ENCODE measurements at regions of chr2 and their contacts with region 1.

Region 1: DNA sequence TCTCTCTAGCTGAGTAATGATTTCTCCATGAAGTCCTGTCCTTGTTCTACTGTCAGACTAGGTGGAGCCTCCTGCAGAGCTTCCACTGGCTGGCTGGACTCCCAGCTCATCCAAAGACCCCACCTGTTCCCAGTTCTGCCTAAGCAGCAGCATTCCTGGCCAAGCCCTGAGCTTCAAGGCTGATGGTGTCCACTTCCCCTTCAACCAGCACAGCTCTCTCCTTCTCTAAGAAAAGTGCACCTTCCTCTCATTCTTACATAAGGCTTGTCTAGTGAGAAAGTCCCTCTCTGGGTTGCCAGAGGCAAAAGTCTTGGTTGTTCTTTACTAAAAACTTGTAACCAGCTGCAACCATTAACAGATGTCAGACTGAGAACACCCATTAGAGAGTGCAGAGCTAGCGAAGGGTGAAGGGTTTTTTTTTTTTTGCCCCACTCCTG is 58.9 kb downstream of the CXCR4 start:
- DNase-seq: no peak
- H3K4me3 Mint-ChIP-seq: no peak overlapping the region
- H3K27ac Mint-ChIP-seq: no peak overlapping the region
- H3K4me1 Mint-ChIP-seq: peaks cover 63% of the 10 kb centered on the region
- H3K27me3 Mint-ChIP-seq: no peaks in the 10 kb centered on the region

Region 2: DNA sequence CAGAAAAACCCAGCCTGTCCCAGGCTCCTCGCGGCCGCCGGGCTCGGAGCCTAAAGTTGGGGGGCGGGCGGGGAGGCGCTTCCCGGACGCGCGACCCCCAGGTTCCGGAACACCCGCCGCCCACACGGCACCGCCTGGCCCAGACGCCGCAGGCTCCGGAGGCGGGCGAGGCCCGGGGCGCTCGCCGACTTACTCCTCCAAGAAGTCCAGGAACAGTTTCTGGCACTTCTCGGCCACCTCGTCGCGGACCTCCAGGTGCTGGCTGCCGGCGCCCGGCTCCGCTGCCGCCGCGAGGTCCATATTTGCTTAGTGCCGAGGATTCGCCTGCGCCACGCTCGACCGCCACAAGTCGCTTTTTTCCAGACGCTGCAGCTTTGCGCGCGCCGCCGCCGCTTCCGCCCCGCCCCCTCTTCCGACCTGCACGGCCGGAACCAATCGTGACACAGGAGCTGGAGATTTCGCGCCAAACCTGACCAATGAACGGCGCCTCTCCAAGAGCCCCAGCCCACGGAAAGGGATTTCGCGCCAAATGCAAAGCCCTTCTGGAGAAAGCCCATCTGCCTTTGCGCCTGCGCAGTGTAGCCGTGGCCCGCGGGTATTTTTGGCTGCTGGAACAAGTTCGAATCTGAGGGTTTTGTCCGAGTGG is 182.9 kb before region 1 on chr2 and contains the start of gene MCM6:
- CTCF ChIA-PET with region 1: no interaction called
- POLR2A ChIA-PET with region 1: interaction called, 8 read pairs
- intact Hi-C with region 1: loop called (anchors 2 kb)
- DNase-seq: peak; percentile 100
- H3K4me3 Mint-ChIP-seq: peak within 1 kb of the TSS; percentile 90
- H3K27ac Mint-ChIP-seq: peak within 1 kb of the TSS; percentile 98
- H3K4me1 Mint-ChIP-seq: peaks cover 39% of the 10 kb centered on the region
- H3K27me3 Mint-ChIP-seq: peaks cover 2% of the 10 kb centered on the region
- total RNA-seq, gene MCM6: 280 to 284 TPM

Region 3: DNA sequence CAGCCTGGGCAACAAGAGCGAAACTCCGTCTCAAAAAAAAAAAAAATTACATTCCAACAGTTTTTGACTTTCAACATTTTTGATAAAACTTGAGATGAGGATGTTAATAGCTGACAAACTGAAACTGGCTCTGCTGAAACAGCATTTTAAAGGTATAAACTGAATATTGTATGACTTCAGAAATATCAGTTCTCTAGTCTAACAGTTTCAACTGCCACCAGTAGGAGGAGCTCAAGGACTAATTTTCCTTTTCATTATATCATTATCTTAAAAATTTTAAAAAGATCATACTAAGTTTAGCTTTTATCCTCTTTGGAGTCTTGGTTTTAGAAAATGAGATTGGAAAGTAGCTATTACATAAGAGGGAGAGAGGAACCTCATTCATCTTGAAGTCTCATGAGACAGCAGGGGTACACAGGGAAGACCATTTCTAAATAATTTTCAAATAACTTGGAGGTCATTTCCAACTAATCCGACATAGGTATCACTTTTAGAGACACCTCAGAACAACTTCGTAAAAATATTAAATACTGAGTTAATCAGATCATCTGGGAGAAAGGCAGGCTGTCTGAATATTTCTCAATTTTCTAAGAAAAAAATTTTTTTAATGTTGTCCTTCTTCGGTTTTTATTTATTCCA is 145.2 kb before region 1 on chr2:
- CTCF ChIA-PET with region 1: interaction called, 3 read pairs
- POLR2A ChIA-PET with region 1: no interaction called
- intact Hi-C with region 1: loop called (anchors 2 kb)
- DNase-seq: no peak
- H3K4me3 Mint-ChIP-seq: no peak overlapping the region
- H3K27ac Mint-ChIP-seq: no peak overlapping the region
- H3K4me1 Mint-ChIP-seq: peaks cover 14% of the 10 kb centered on the region
- H3K27me3 Mint-ChIP-seq: no peaks in the 10 kb centered on the region

Region 4: GRCh38 chr2:135948642-135949355 is 110.3 kb before region 1 on chr2:
- CTCF ChIA-PET with region 1: no interaction called
- POLR2A ChIA-PET with region 1: interaction called, 14 read pairs
- intact Hi-C with region 1: loop called (anchors 1 kb)
- DNase-seq: peak; percentile 55
- H3K4me3 Mint-ChIP-seq: peak overlapping the region; percentile 53
- H3K27ac Mint-ChIP-seq: peak overlapping the region; percentile 87
- H3K4me1 Mint-ChIP-seq: peaks cover 64% of the 10 kb centered on the region
- H3K27me3 Mint-ChIP-seq: no peaks in the 10 kb centered on the region

Region 5: GRCh38 chr2:136212423-136213378 is 153.6 kb after region 1 on chr2:
- CTCF ChIA-PET with region 1: no interaction called
- POLR2A ChIA-PET with region 1: no interaction called
- intact Hi-C with region 1: loop called (anchors 2 kb)
- DNase-seq: peak; percentile 61
- H3K4me3 Mint-ChIP-seq: no peak overlapping the region
- H3K27ac Mint-ChIP-seq: peak overlapping the region; percentile 59
- H3K4me1 Mint-ChIP-seq: peaks cover 46% of the 10 kb centered on the region
- H3K27me3 Mint-ChIP-seq: no peaks in the 10 kb centered on the region

Region 6: DNA sequence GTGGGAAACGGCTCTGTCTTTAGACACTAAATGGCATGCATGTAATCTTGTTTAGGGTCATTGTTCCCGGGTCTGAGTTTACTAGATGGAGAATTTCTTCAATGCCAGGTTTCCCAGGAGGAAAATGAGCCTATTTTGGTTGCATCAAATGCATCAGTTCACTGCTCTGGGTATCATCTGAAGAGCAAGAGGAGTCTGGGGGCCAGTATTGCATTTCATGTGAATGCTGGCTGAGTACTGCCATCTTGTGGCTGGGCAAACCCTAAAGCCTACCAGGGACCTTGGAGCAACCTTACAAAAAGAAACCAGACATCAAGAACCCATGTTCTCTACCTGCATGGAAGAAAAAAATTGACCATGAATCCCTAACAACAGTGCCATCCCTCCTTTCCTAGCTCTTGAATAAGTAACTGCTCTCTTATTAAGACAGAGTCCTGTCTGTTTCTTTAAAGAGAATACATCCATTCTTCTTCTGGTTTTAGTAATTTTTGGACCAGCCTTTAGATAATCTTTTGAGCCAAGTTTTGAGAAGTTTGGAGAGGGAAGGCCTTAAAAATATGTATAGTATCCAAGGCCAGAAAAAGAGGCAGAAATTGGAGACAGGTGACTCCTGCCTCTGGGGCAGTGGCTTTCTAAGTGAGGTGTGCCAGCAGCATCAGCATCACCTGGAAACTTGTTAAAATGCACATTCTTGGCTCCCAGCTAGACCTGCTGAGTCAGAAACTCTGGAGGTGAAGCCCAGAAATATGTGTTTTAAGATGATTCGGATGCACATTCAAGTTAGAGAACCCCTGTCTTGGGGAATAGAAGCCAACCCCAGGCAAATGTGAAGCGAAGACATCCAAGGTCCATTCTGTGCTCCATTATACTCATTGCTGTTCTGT is 319.9 kb after region 1 on chr2:
- CTCF ChIA-PET with region 1: interaction called, 17 read pairs
- POLR2A ChIA-PET with region 1: interaction called, 12 read pairs
- intact Hi-C with region 1: loop called (anchors 1 kb)
- DNase-seq: peak; percentile 88
- H3K4me3 Mint-ChIP-seq: no peak overlapping the region
- H3K27ac Mint-ChIP-seq: peak overlapping the region; percentile 44
- H3K4me1 Mint-ChIP-seq: peaks cover 87% of the 10 kb centered on the region
- H3K27me3 Mint-ChIP-seq: no peaks in the 10 kb centered on the region

Measured in activated CD4-positive, alpha-beta memory T cell treated with anti-CD3 and anti-CD28 coated beads for 36 hours (primary cell).